ENCODE measurements at regions of chr2 and their contacts with region 1.

Region 1: DNA sequence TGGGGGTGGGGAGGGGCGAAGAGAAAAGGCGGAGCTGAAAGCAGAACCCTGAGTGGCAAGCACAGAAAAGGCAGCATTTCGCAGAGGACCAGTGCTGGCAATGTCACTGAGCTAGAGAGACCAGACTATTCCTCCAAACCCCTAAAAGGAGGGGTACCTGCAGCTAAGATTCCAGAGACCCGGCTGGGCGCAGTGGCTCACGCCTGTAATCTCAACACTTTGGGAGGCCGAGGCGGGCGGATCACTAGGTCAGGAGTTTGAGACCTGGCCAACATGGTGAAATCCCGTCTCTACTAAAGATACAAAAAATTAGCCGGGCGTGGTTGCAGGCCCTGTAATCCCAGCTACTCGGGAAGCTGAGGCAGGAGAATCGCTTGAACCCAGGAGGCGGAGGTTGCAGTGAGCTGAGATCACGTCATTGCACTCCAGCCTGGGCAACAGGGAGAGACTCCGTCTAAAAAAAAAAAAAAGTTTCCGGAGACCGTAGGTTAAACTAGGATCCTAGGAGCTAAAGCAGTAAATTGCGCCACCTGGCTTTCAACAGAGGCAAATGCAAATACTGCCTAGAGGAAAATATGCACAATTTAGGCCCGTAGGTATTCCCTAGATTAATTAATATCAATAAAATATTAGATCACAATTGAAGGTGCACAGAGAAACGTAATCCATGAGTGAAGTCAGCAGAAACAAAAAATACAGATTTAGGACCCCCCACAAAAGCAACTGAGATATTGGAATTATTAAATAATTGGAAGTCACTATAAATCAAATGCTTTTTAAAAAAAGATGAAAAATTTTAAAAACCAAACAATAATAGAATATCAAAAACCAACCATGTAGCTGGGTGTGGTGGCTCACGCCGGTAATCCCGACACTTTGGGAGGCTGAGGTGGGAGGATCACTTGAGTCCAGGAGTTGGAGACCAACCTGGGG is 4.9 kb downstream of the UCN start:
- H3K4me3 ChIP-seq: no peak overlapping the region
- H3K27ac ChIP-seq: no peak overlapping the region
- H3K4me1 ChIP-seq: no peaks in the 10 kb centered on the region
- CTCF ChIP-seq: peak; percentile 69; the same call in 1 of the 2 replicates

Region 2: GRCh38 chr2:27102329-27102728 is 201.0 kb before region 1 on chr2:
- CTCF ChIA-PET with region 1: interaction called, 16 read pairs
- POLR2A ChIA-PET with region 1: no interaction called
- H3K4me3 ChIP-seq: no peak overlapping the region
- H3K27ac ChIP-seq: no peak overlapping the region
- H3K4me1 ChIP-seq: no peaks in the 10 kb centered on the region
- CTCF ChIP-seq: no peak

Region 3: GRCh38 chr2:27255660-27256059 is 47.7 kb before region 1 on chr2:
- CTCF ChIA-PET with region 1: interaction called, 61 read pairs
- POLR2A ChIA-PET with region 1: no interaction called
- H3K4me3 ChIP-seq: no peak overlapping the region
- H3K27ac ChIP-seq: no peak overlapping the region
- H3K4me1 ChIP-seq: no peaks in the 10 kb centered on the region
- CTCF ChIP-seq: no peak

Region 4: GRCh38 chr2:27281855-27282559 is 21.4 kb before region 1 on chr2 and contains the start of gene TRIM54:
- CTCF ChIA-PET with region 1: interaction called, 211 read pairs
- POLR2A ChIA-PET with region 1: no interaction called
- H3K4me3 ChIP-seq: no peak within 1 kb of the TSS
- H3K27ac ChIP-seq: no peak within 1 kb of the TSS
- H3K4me1 ChIP-seq: no peaks in the 10 kb centered on the region; the same call in 1 of the 2 replicates
- CTCF ChIP-seq: no peak

Region 5: GRCh38 chr2:27322766-27323595 is 19.6 kb after region 1 on chr2 and contains the start of gene MPV17:
- CTCF ChIA-PET with region 1: interaction called, 50 read pairs
- POLR2A ChIA-PET with region 1: interaction called, 4 read pairs
- H3K4me3 ChIP-seq: peak within 1 kb of the TSS; percentile 76
- H3K27ac ChIP-seq: peak within 1 kb of the TSS; percentile 82
- H3K4me1 ChIP-seq: peaks cover 6% of the 10 kb centered on the region; the same call in 1 of the 2 replicates
- CTCF ChIP-seq: no peak

Region 6: DNA sequence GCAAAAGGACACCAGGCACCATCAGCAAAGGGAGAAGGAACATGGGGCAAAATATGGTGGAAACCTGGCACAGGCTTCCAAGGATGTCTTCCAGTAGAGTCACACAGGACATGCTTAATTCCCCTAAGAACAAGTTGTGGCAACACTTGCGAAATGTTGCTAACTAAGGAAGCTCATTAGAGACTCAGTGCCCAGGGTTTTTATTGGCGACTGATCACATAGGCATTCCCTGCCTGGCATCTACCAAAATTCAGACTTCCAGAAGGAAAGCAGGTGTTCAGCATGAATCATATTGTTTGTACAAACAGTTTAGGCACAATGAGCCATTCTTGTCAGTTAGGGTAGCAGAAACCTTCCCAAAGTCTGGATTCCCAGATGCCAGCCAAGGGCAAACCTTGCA is 386.1 kb after region 1 on chr2:
- CTCF ChIA-PET with region 1: no interaction called
- POLR2A ChIA-PET with region 1: no interaction called
- H3K4me3 ChIP-seq: no peak overlapping the region
- H3K27ac ChIP-seq: no peak overlapping the region
- H3K4me1 ChIP-seq: no peaks in the 10 kb centered on the region
- CTCF ChIP-seq: no peak

Region 7: GRCh38 chr2:28480403-28481049 is 1177.2 kb after region 1 on chr2:
- CTCF ChIA-PET with region 1: no interaction called
- POLR2A ChIA-PET with region 1: no interaction called
- H3K4me3 ChIP-seq: no peak overlapping the region
- H3K27ac ChIP-seq: no peak overlapping the region
- H3K4me1 ChIP-seq: no peaks in the 10 kb centered on the region
- CTCF ChIP-seq: no peak